BJ (cell line): ENCODE measurements at regions of chr11 and their contacts with region 1.

Region 1: DNA sequence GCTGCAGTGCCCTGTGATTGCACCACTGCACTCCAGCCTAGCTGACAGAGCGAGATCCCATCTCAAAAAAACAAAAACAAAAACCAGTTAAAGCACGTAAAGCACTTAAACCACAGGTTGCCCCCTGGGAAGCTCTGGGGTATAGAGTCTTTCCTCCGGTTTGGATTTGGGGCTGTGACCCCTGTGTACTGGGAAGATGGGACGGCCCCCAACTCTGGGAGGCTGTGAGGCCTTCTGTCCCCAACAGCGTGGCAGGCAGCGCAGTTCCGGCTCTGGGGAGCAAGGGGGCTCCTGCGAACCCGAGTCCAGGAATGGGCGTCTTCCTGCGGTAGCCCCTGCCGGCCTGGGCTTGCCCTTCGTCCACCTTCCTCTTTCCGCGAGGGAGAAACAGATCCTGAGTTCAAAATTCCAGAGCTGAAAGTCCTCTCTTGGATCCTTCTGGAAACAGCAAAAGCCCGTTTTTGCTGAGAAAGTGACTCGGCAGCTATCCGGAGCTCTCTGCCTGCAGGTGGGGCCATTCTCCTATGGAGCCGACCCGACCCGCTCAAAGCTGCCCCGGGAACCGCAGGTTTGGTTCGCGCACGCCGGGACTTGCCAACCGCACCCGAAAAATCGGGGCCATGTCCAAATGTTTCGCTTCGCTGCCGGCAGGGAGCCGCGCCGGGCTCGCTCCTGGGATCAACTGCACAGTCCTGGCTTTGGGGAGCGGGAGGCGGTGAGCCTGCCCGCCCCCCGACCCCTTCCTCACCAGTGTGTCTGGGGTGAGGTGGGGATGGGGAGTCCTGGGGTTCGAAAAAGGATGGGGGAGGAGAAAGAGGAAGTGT is 36.3 kb upstream of the POLA2 start:
- DNase-seq: no peak
- H3K4me3 ChIP-seq: peak overlapping the region; percentile 30
- H3K27me3 ChIP-seq: no peaks in the 10 kb centered on the region
- CTCF ChIP-seq: peak; percentile 71

Region 2: DNA sequence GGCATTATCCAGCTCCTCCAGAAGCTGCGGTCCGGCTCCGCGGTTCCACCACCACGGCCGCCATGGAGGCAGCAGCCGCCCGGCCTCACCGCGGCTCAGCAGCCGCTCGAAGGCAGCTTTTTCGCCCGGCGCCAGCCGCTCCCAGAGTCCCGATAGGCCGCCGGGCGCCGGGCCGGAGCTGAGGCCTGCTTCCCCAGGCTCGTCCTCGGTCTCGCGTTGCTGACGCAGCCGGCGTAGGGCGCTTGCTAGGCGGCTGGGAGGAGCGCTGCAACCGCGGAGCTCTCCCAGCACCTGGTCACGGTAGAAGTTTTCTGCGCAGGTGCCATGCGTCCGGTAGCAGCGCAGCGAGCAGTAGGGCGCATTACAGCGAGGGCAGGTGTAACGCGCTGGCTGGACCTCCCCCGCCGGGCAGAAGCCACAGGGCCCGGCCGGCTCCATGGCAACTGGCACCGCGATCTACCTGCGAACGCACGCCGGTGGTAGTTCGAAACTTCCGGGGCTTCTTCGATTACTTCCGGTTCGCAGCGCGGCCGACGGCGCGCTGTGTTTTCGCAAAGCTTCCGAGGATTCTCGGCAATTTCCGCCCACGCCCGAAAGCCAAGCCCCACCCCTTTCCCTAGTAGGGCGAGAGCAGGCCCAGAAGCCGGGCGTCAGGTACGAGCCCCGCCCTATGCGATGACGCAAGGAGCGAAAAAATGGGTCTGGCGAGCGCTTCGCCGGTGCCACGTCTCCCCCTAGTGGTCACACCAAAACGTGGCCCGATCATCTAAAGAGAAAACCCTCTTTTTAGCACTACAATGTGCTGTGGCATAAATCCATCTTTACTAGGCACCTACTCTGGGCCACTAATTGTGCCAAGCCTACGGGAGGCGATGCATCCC is 108.0 kb before region 1 on chr11 and contains the start of gene ZNHIT2:
- CTCF ChIA-PET with region 1: no interaction called
- POLR2A ChIA-PET with region 1: no interaction called
- DNase-seq: peak; percentile 94
- H3K4me3 ChIP-seq: peak within 1 kb of the TSS; percentile 79
- H3K27me3 ChIP-seq: no peaks in the 10 kb centered on the region
- CTCF ChIP-seq: peak; percentile 90
- polyA plus RNA-seq, gene ZNHIT2: 3.6 and 4.6 TPM in 2 replicates

Region 3: DNA sequence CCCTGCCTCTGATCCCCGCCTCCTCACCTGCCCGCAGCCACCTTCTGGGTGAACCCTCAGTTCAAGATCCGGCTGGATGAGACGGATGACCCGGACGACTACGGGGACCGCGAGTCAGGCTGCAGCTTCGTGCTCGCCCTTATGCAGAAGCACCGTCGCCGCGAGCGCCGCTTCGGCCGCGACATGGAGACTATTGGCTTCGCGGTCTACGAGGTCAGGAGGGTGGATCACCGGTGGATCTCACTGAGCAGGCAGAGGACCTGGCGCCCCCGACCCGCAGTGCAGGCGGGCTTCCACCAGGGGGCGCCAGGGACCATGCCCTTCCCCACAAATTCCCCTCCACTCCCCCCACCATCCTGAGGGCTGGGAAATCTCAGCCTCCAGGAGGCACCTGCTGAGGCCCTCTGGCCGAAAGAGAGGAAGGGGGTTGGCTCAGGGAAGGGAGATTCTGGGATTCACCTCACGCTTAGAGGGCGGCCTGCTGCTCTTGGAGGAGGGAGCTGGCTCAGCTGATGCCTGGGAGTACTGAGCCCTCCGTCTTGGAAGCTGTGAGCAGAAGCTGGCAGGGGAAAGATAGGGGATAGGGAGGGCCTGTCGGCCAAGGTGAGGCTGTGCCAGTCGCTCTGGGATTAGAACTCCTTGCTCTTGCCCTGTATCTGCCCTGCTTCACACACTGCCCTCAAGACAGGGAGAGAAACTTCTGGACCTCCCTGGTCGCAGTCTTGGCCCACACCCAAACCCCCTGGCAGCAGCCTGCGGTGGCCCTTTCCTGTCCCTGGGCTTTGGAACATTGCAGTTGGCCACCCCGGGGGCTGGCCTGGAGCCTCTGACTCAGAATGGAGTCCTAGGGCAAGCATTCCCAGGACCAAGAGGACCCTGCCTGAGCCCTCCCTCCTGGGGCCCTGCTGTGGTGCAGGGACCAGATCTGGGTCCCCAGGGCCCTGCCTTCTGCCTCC is 20.6 kb before region 1 on chr11:
- CTCF ChIA-PET with region 1: interaction called, 17 read pairs
- POLR2A ChIA-PET with region 1: no interaction called
- DNase-seq: no peak
- H3K4me3 ChIP-seq: no peak overlapping the region
- H3K27me3 ChIP-seq: no peaks in the 10 kb centered on the region
- CTCF ChIP-seq: peak; percentile 93

Region 4: DNA sequence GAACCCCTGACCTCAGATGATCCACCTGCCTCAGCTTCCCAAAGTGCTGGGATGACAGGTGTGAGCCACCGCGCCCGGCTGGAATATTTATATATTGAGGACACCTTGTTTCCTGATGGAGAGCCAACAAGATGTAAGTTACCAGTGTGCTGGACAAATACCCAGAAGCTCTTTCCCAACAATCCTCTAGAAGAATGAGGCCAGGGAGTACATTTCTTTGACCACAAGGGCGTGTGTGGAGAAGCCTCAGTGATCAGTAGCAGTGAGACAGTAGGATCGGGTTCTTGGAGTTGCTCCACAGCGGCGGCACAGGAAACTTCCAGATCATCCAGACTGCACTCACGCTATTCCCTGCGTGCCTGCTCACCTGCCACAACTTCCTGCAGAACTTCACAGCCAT is 26.0 kb after region 1 on chr11:
- CTCF ChIA-PET with region 1: interaction called, 40 read pairs
- POLR2A ChIA-PET with region 1: no interaction called
- DNase-seq: no peak
- H3K4me3 ChIP-seq: no peak overlapping the region
- H3K27me3 ChIP-seq: no peaks in the 10 kb centered on the region; the same call in 1 of the 2 replicates
- CTCF ChIP-seq: peak; percentile 2; the same call in 1 of the 2 replicates

Region 5: DNA sequence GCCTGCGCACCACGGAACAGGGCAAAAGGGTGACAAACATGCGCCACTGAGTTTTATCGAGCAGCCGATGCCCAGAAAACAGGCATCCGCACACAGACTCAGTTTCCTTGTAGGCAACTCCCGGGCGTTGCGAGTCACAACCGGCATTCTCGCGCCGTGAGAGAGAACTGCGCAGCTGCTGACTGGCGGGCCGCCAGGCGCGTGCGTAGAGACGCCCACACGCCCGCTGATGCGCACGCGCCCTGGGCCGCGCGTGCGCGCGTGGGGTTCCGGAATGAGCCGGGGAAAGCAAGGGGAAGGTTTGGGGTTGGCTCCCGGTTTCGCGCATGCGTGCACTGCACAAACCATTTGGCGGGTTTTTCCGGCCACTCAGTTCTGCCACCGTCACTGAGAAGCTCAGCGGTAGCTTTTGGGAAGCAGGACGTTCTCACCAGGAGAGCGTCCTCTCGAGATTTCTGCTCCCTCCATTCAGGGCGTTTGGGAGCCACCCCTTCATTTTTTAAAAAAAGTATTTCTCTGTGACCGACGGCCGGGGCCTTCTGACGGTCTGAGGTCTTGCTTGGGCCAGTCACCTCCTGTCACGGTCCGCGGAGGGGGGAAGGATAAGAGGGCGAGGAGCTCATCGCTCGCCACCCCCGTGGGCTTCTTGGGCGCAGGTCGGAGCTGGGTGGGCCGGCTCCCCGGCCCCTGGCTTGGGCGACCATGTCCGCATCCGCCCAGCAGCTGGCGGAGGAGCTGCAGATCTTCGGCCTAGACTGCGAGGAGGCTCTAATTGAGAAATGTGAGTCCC is 36.3 kb after region 1 on chr11 and contains the start of gene POLA2:
- CTCF ChIA-PET with region 1: interaction called, 13 read pairs
- POLR2A ChIA-PET with region 1: no interaction called
- DNase-seq: peak; percentile 81
- H3K4me3 ChIP-seq: peak within 1 kb of the TSS; percentile 67
- H3K27me3 ChIP-seq: no peaks in the 10 kb centered on the region
- CTCF ChIP-seq: no peak
- polyA plus RNA-seq, gene POLA2: 11.8 and 14.5 TPM in 2 replicates

Region 6: GRCh38 chr11:65329944-65330403 is 104.5 kb after region 1 on chr11:
- CTCF ChIA-PET with region 1: interaction called, 27 read pairs
- POLR2A ChIA-PET with region 1: no interaction called
- DNase-seq: no peak
- H3K4me3 ChIP-seq: no peak overlapping the region
- H3K27me3 ChIP-seq: no peaks in the 10 kb centered on the region
- CTCF ChIP-seq: peak; percentile 71